ENCODE measurements at regions of chr18 and their contacts with region 1.

Region 1: DNA sequence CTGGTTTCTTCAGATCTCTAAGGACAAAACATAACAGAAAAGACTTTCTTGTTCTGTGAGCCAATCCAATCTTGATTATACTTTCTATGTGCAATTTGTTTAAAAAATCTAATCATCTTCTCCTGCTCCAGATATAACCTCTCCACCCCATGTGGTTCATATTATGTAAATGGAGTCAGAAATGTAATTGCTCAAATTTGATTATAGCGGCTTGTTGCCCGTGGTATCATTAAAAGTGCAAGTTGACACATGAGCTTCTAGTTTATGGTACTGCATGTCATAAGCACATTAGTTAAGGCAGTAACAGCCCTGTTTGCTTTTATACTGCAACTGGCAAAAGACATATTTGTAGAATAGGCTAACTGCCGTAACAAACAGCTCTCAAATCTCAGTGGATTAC is 715.1 kb upstream of the CDH7 start:
- DNase-seq: no peak
- ATAC-seq: no peak
- H3K4me3 Mint-ChIP-seq: no peak overlapping the region
- H3K27ac Mint-ChIP-seq: no peak overlapping the region
- H3K4me1 Mint-ChIP-seq: no peaks in the 10 kb centered on the region
- H3K27me3 Mint-ChIP-seq: no peaks in the 10 kb centered on the region
- CTCF ChIP-seq: no peak

Region 2: GRCh38 chr18:64993695-64994094 is 42.0 kb before region 1 on chr18:
- CTCF ChIA-PET with region 1: no interaction called
- POLR2A ChIA-PET with region 1: no interaction called
- intact Hi-C with region 1: loop called (anchors 5 kb)
- DNase-seq: no peak
- ATAC-seq: no peak
- H3K4me3 Mint-ChIP-seq: no peak overlapping the region
- H3K27ac Mint-ChIP-seq: no peak overlapping the region
- H3K4me1 Mint-ChIP-seq: no peaks in the 10 kb centered on the region
- H3K27me3 Mint-ChIP-seq: no peaks in the 10 kb centered on the region
- CTCF ChIP-seq: no peak

Region 3: DNA sequence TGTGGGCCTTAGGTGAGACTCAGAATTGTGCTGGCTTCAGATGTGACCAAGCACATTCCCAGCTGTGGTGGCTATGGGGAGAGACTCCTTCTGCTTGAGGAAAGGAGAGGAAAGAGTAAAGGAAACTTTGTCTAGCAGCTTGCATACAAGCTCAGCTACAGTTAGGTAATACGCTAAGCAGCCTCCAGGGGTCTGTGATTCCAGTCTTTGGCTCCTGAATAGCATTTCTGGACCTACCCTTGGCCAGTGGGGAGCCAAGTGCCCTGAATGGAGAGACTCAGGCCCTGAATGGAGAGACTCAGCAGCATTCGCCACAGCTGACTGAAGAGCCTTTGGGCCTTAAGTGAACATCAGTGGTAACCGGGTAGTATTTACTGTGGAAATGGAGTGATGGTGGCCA is 487.8 kb after region 1 on chr18:
- CTCF ChIA-PET with region 1: no interaction called
- POLR2A ChIA-PET with region 1: no interaction called
- intact Hi-C with region 1: no loop called
- DNase-seq: no peak
- ATAC-seq: no peak
- H3K4me3 Mint-ChIP-seq: no peak overlapping the region
- H3K27ac Mint-ChIP-seq: no peak overlapping the region
- H3K4me1 Mint-ChIP-seq: no peaks in the 10 kb centered on the region
- H3K27me3 Mint-ChIP-seq: no peaks in the 10 kb centered on the region
- CTCF ChIP-seq: no peak